Activated CD8-positive, alpha-beta T cell treated with anti-CD3 and anti-CD28 coated beads, Interleukin-2, amount 10 ng/mL, durations not matched to agents 7 days and 5 days (primary cell): ENCODE measurements at regions of chr22 and their contacts with region 1.

Region 1: GRCh38 chr22:43993027-43993760 is 30.9 kb upstream of the PARVB start:
- DNase-seq: peak; percentile 70
- ATAC-seq: peak; percentile 71
- H3K4me3 Mint-ChIP-seq: no peak overlapping the region
- H3K27ac Mint-ChIP-seq: peak overlapping the region; percentile 48
- H3K4me1 Mint-ChIP-seq: peaks cover 28% of the 10 kb centered on the region
- H3K27me3 Mint-ChIP-seq: no peaks in the 10 kb centered on the region

Region 2: DNA sequence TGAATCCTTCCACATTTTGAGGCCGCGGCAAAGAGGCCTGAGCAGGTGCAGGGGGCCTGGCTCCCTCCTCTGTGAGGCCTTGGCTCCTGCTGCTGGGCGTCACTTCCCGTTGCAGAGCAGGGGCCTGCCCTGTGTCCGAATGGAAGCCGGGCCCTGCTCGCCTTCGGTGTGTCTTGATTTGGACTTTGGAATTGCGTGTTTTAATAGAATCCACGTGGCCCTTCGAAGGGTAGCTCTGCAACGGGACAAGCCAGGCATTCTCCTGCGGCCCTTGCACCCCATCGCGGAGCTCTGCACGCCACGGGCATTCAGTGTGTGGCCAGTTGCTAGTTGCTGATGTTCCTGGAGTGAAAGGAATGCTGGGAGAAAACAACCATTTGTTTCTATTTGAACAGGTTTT is 12.2 kb before region 1 on chr22:
- CTCF ChIA-PET with region 1: interaction called, 19 read pairs
- POLR2A ChIA-PET with region 1: no interaction called
- DNase-seq: no peak
- ATAC-seq: no peak
- H3K4me3 Mint-ChIP-seq: no peak overlapping the region
- H3K27ac Mint-ChIP-seq: no peak overlapping the region
- H3K4me1 Mint-ChIP-seq: no peaks in the 10 kb centered on the region
- H3K27me3 Mint-ChIP-seq: no peaks in the 10 kb centered on the region

Region 3: GRCh38 chr22:44003405-44004103 is 10.4 kb after region 1 on chr22:
- CTCF ChIA-PET with region 1: interaction called, 32 read pairs
- POLR2A ChIA-PET with region 1: no interaction called
- DNase-seq: no peak
- ATAC-seq: no peak
- H3K4me3 Mint-ChIP-seq: no peak overlapping the region
- H3K27ac Mint-ChIP-seq: no peak overlapping the region
- H3K4me1 Mint-ChIP-seq: no peaks in the 10 kb centered on the region
- H3K27me3 Mint-ChIP-seq: no peaks in the 10 kb centered on the region

Region 4: DNA sequence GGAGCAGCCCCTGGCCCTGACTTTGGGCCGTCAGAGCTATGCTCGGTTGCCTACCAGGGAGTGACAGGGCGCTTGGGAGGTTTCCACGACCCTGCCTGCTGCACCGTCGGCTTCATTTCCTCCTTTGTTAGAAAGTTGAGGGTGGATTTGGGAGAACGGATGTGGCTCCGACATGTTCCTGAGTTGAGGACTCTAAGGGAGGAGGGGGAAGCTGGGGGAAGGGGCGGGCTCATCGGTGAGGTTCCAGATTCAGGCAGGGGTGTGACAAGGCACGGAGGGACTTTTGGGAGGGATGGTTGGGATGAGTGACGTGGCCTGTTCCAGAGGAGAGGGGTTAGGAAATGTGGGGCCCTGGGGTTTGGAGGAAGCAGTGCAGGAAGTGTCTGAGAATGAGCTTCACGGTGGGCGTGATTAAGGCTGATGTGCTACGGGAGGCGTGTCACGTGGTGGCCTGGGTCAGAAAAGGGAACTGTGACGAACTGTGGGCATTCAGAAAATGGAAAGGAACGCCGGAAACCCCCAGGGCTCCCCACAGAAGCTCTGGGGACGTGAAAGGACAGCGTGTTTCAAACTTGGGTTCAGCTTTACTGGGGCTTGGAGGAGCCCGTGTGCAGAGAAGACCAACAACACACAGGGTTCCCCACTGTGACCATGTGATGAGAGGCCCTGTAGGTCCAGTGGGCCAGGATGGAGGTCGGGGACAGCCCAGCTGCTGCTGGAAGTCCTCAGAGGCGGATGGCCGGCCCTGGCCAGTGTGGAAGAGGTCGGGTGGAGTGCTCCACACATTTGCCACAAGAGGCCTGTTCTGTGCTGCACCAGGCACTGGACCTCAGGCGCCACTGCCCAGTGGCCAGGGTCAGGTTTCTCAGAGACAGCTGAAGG is 33.7 kb after region 1 on chr22:
- CTCF ChIA-PET with region 1: interaction called, 25 read pairs
- POLR2A ChIA-PET with region 1: no interaction called
- DNase-seq: peak; percentile 85
- ATAC-seq: peak; percentile 69
- H3K4me3 Mint-ChIP-seq: peak overlapping the region; percentile 67
- H3K27ac Mint-ChIP-seq: peak overlapping the region; percentile 89
- H3K4me1 Mint-ChIP-seq: peaks cover 62% of the 10 kb centered on the region
- H3K27me3 Mint-ChIP-seq: no peaks in the 10 kb centered on the region

Region 5: GRCh38 chr22:44080936-44081861 is 88.0 kb after region 1 on chr22:
- CTCF ChIA-PET with region 1: interaction called, 216 read pairs
- POLR2A ChIA-PET with region 1: interaction called, 9 read pairs
- DNase-seq: peak; percentile 81
- ATAC-seq: no peak
- H3K4me3 Mint-ChIP-seq: no peak overlapping the region
- H3K27ac Mint-ChIP-seq: no peak overlapping the region
- H3K4me1 Mint-ChIP-seq: no peaks in the 10 kb centered on the region
- H3K27me3 Mint-ChIP-seq: no peaks in the 10 kb centered on the region

Region 6: GRCh38 chr22:44261861-44262595 is 268.8 kb after region 1 on chr22:
- CTCF ChIA-PET with region 1: no interaction called
- POLR2A ChIA-PET with region 1: no interaction called
- DNase-seq: no peak
- ATAC-seq: no peak
- H3K4me3 Mint-ChIP-seq: no peak overlapping the region
- H3K27ac Mint-ChIP-seq: no peak overlapping the region
- H3K4me1 Mint-ChIP-seq: peaks cover 12% of the 10 kb centered on the region
- H3K27me3 Mint-ChIP-seq: peaks cover 4% of the 10 kb centered on the region

Region 7: DNA sequence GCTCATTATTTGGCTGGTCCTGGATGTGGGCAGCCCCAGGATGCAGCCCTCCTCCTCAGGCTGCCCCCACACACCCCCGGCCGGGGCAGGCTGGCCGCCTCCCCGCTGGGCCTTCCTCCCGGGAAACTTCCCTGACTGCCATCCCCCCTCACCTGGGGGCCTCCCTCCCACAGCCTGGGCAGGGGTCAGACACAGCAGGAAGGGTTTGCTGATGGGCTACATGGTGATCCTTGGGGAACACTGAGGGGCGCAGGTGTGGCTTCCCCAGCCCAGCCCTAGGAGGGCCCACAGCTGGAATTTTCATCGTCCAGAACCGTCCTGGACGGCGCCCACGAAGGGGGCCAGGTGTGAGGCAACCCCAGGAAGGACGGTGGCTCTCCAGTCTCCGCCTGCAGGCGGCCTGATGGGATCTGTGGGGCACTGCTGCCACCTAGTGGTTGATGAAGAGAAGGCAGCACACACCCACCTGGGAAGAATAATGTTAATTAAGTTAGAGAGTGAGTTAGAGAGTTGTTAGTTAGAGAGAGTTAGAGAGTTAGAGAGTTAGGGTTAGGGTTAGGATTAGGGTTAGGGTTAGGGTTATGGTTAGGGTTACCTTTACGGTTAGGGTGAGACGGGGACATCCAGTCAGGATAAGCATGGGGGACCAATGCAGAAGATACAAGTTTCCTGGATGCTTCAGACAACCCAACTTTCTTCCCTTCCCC is 632.9 kb after region 1 on chr22:
- CTCF ChIA-PET with region 1: interaction called, 45 read pairs
- POLR2A ChIA-PET with region 1: no interaction called
- DNase-seq: peak; percentile 88
- ATAC-seq: peak; percentile 66
- H3K4me3 Mint-ChIP-seq: no peak overlapping the region
- H3K27ac Mint-ChIP-seq: peak overlapping the region; percentile 16
- H3K4me1 Mint-ChIP-seq: peaks cover 7% of the 10 kb centered on the region
- H3K27me3 Mint-ChIP-seq: peaks cover 4% of the 10 kb centered on the region

Region 8: DNA sequence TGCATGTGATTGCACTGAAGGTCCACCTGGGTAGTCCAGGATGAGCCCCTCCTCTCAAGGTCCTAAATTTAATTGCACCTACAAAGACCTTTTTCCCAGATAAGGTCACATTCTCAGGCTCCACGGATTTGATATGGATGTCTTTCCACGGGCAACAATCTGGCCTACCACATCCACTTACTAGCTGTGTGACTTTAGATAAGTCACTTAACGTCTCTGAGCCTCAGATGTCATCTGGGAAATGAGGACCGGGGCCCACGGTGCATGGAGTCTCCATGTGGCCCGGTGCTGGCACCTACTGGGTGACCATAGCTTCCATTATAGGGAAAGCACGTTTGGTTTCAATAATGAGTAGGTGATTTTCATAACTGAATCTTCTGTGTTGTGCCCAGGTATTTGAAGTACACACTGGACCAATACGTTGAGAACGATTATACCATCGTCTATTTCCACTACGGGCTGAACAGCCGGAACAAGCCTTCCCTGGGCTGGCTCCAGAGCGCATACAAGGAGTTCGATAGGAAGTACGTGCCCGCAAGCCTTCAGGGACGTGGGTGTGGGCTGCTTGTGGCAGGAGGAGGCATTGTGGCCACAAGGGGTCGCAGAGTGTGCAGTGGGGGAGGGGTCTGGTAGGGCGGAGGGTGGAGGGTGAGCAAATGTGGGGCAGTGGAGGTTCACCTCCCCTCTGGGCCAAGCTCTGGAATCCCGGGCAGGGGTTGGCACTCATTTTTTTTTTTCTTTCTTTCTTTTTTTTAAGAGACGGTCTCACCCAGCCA is 814.9 kb after region 1 on chr22:
- CTCF ChIA-PET with region 1: no interaction called
- POLR2A ChIA-PET with region 1: no interaction called
- DNase-seq: peak; percentile 25
- ATAC-seq: no peak
- H3K4me3 Mint-ChIP-seq: no peak overlapping the region
- H3K27ac Mint-ChIP-seq: peak overlapping the region; percentile 39
- H3K4me1 Mint-ChIP-seq: peaks cover 20% of the 10 kb centered on the region
- H3K27me3 Mint-ChIP-seq: no peaks in the 10 kb centered on the region